Caco-2 (cell line): ENCODE measurements at regions of chr22 and their contacts with region 1.

Region 1: GRCh38 chr22:37784829-37785493 is 22.8 kb upstream of the GCAT start:
- DNase-seq: peak; percentile 85 to 86
- H3K4me3 ChIP-seq: no peak overlapping the region
- H3K4me3 Mint-ChIP-seq: peak overlapping the region; percentile 34
- H3K27ac Mint-ChIP-seq: peak overlapping the region; percentile 81
- H3K4me1 ChIP-seq: peaks cover 18% of the 10 kb centered on the region
- H3K4me1 Mint-ChIP-seq: peaks cover 17% of the 10 kb centered on the region
- H3K27me3 ChIP-seq: no peaks in the 10 kb centered on the region
- H3K27me3 Mint-ChIP-seq: no peaks in the 10 kb centered on the region
- CTCF ChIP-seq: no peak

Region 2: GRCh38 chr22:37745548-37746365 is 39.2 kb before region 1 on chr22:
- CTCF ChIA-PET with region 1: no interaction called
- POLR2A ChIA-PET with region 1: no interaction called
- intact Hi-C with region 1: no loop called
- DNase-seq: peak; percentile 90 to 92
- H3K4me3 ChIP-seq: peak overlapping the region; percentile 97
- H3K4me3 Mint-ChIP-seq: peak overlapping the region; percentile 90
- H3K27ac Mint-ChIP-seq: peak overlapping the region; percentile 63
- H3K4me1 ChIP-seq: peaks cover 12% of the 10 kb centered on the region
- H3K4me1 Mint-ChIP-seq: peaks cover 13% of the 10 kb centered on the region
- H3K27me3 ChIP-seq: no peaks in the 10 kb centered on the region
- H3K27me3 Mint-ChIP-seq: no peaks in the 10 kb centered on the region
- CTCF ChIP-seq: no peak

Region 3: DNA sequence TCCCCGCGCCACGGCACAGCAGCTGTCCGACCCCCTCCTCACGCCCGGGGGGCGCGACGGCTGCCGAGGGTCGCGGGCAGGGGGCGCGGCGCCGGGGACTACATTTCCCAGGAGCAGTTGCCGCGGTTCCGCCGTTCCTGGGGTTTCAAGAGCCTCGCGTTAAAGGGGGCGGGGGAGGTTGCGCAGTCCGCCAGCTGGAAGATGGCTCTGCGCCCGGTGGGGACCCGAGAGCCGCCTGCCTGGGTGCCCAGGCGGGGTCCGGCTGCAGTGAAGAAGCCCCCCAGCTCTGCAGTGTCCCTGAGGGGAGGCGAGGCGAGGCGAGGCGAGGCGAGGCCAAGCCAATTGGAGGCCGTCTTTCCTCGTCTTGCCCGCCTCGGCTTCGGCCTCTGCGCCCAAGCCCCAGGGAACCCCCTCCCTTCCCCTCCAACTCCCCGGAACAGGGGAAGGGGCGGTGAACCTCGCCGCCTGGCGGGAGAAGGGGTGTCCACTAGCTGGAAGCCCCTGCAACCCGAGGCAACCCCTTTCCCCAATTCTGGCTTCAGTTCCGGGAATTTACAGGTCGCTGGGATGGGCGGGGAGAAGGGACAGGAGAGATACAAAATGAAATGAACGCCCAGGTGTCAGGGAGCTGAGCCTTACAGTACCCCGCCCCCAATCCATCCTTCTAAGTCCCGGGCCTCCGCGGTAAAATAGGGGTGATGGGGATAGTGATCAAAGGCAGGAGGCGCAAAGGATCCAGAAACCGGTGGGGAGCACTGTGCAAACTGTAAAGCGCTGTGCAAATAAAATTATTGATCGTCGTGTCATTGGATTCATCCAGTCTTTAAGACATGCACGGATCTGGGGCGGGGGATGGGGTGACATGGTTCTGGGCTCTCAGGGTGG is 17.6 kb after region 1 on chr22:
- CTCF ChIA-PET with region 1: interaction called, 8 read pairs
- POLR2A ChIA-PET with region 1: interaction called, 7 read pairs
- intact Hi-C with region 1: loop called (anchors 2 kb)
- DNase-seq: peak in 1 of 2 experiments; percentile 73
- H3K4me3 ChIP-seq: peak overlapping the region; percentile 46
- H3K4me3 Mint-ChIP-seq: peak overlapping the region; percentile 90
- H3K27ac Mint-ChIP-seq: peak overlapping the region; percentile 92
- H3K4me1 ChIP-seq: peaks cover 13% of the 10 kb centered on the region
- H3K4me1 Mint-ChIP-seq: peaks cover 25% of the 10 kb centered on the region
- H3K27me3 ChIP-seq: no peaks in the 10 kb centered on the region
- H3K27me3 Mint-ChIP-seq: no peaks in the 10 kb centered on the region
- CTCF ChIP-seq: peak; percentile 2 to 38